ENCODE measurements at regions of chr11 and their contacts with region 1.

Region 1: GRCh38 chr11:65497141-65498041 is 1.5 kb upstream of the MALAT1 start:
- DNase-seq: peak; percentile 98 to 99 (median 99)
- H3K4me3 ChIP-seq: peak overlapping the region; percentile 72 to 100 (median 98)
- H3K27ac ChIP-seq: peak overlapping the region; percentile 100
- H3K4me1 ChIP-seq: peaks cover 22 to 57% (median 54%) of the 10 kb centered on the region in 4 experiments
- H3K27me3 ChIP-seq: no peaks in the 10 kb centered on the region

Region 2: DNA sequence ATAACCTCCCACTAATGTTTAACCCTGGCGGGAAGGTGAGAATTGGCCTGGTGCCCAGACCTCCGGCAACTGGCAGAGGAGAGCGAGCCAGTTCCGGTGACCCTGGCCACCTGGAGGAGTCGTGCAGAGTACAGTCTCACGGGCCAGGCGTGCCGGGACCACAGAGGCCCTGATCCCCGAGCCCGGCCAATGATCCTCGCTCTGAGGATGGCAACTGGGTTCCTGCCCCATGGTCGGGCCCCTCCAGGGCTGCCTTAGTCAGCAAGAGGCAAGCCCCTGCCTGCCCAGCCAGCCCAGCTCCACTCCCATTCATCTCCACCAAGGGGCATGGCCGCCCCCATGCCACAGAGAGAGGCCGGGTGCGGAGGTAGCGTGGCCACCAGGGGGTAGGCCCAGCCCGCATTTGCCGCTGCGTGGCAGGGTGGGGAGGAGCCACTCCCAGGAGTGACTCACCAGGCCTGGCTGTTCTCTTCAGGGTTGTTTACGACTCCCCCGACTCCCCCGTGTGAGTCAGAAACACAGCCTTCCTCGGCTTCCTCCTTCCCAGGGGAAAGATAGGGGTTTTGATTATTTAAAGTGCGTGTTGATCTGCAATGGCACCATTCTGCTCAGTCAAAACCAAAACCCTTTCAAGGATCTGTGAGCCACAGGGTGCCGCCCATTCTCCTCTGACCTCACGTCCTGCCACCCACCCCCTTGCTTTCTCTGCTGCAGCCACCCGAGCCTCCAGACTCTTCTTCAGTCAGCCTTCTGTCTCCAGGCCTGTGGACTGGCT is 115.2 kb before region 1 on chr11 and contains the start of gene SLC25A45:
- CTCF ChIA-PET with region 1: interaction called, 16 read pairs
- POLR2A ChIA-PET with region 1: interaction called, 23 read pairs
- DNase-seq: peak; percentile 95 to 98 (median 97)
- H3K4me3 ChIP-seq: peak within 1 kb of the TSS; percentile 39 to 80 (median 62)
- H3K27ac ChIP-seq: peak within 1 kb of the TSS; percentile 88 to 93
- H3K4me1 ChIP-seq: peaks cover 2 to 96% (median 87%) of the 10 kb centered on the region in 4 experiments
- H3K27me3 ChIP-seq: no peaks in the 10 kb centered on the region

Region 3: DNA sequence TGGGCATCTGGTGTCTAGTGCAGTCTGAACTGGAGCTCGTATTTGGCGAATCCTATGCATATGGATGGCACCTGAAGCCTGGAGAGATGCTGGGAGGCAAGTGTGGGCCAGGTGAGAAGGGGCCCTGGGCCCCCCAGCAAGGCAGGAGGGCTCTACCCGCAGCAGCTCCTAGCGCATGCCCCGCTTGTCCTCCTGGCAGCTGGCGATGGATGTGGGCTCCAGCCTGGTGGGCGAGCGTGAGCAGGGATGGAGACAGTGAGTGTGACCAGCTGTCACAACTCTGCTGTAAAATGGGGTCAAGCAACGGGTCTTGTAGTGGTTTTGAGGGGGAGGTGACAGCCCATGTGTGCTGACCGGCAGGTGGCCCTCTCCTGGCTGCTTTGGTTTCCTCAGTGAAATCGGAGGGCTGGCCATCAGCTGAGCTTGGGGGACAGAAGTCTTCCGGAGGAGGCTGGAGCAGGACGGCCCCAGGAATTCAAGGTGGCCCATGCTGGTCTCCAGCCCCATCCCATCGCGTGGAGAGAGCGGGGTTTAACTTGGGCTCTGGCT is 99.0 kb before region 1 on chr11:
- CTCF ChIA-PET with region 1: no interaction called
- POLR2A ChIA-PET with region 1: interaction called, 11 read pairs
- DNase-seq: no peak
- H3K4me3 ChIP-seq: no peak overlapping the region
- H3K27ac ChIP-seq: no peak overlapping the region
- H3K4me1 ChIP-seq: peaks cover 2 to 18% (median 16%) of the 10 kb centered on the region in 4 experiments
- H3K27me3 ChIP-seq: no peaks in the 10 kb centered on the region

Region 4: GRCh38 chr11:65440831-65441499 is 56.4 kb before region 1 on chr11:
- CTCF ChIA-PET with region 1: no interaction called
- POLR2A ChIA-PET with region 1: interaction called, 26 read pairs
- DNase-seq: no peak
- H3K4me3 ChIP-seq: no peak overlapping the region
- H3K27ac ChIP-seq: no peak overlapping the region
- H3K4me1 ChIP-seq: peaks cover 11 to 36% (median 27%) of the 10 kb centered on the region in 4 experiments
- H3K27me3 ChIP-seq: no peaks in the 10 kb centered on the region

Region 5: DNA sequence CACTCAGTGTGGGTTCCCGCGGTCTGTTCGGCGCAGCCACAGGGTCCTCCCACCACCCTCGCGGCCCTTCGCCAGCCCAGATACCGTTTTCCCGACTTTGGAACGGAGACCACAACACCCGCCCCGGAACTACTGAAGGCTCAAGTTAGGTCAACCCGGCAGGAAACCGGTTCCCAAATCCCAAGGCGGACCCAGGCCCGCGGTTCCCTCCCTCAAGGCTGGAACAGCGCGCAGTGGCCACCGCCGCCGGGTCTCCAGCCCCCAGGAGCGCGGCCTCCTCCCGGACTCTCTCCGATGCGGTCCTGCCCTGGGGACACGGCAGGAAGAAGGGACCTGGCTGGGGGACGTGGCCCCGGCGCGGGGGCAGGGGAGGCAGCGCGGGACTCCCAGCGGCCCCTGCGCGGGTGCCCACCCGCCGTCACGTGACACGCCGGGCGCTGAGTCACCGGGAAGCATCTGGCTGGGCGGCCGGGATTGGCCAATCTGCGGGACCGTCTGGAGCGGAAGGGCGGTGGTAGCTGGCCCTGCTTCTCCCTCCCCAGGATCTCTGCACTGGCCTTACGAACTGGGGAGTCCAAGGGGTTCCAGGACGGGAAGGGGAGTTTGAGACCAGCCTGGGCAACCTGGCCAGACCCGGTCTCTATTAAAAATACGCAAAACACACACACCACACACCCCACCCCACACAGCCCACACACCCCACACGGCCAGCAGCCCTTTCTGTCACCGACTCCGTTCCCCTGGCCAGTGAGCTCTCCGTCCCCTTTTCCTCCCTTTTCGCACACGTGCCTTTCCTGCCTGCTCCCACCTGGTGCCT is 20.0 kb before region 1 on chr11:
- CTCF ChIA-PET with region 1: interaction called, 653 read pairs
- POLR2A ChIA-PET with region 1: interaction called, 1,072 read pairs
- DNase-seq: peak; percentile 91 to 97 (median 96)
- H3K4me3 ChIP-seq: peak overlapping the region; percentile 42 to 88 (median 83)
- H3K27ac ChIP-seq: peak overlapping the region; percentile 98
- H3K4me1 ChIP-seq: peaks cover 9 to 55% (median 48%) of the 10 kb centered on the region in 4 experiments
- H3K27me3 ChIP-seq: no peaks in the 10 kb centered on the region

Region 6: DNA sequence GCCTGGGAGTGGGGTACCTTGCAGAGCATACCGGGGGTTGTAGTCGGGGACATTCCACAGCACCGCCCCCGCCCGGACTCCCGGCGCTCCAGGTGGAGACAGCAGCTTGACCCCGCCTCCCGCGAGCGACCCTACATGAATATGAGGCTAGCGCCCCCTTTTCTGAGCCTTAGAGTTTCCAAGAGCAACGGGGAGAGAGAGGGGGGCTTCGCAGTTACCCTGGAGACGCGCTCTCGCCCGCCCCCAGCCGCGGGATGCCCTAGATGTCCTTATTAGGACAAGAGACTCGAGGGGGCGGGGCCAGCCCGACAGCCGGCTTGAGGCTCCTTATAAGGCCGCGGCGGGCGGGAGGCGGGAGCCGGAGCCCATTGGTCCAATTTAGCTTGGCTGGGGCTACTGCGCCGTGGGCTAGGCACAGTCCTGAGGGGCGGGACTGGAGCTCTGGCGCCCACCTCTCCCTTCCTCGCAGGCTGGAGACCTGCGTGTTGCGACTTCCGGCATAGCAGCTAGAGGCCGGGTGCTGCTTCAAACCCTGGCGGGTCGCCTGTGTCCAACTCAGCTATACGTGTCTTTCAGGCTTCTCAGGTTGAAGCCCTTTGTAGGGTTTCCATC is 361.9 kb after region 1 on chr11:
- CTCF ChIA-PET with region 1: no interaction called
- POLR2A ChIA-PET with region 1: no interaction called
- DNase-seq: peak; percentile 97 to 99 (median 99)
- H3K4me3 ChIP-seq: peak overlapping the region; percentile 80 to 96 (median 90)
- H3K27ac ChIP-seq: peak overlapping the region; percentile 68 to 85
- H3K4me1 ChIP-seq: peaks cover 14 to 52% (median 49%) of the 10 kb centered on the region in 4 experiments
- H3K27me3 ChIP-seq: no peaks in the 10 kb centered on the region